Activated naive CD4-positive, alpha-beta T cell treated with anti-CD3 and anti-CD28 coated beads for 36 hours (primary cell): ENCODE measurements at regions of chr14 and their contacts with region 1.

Region 1: GRCh38 chr14:66507722-66508546 is at the start of gene GPHN:
- DNase-seq: peak; percentile 92
- H3K4me3 Mint-ChIP-seq: peak within 1 kb of the TSS; percentile 96
- H3K27ac Mint-ChIP-seq: peak within 1 kb of the TSS; percentile 85
- H3K4me1 Mint-ChIP-seq: peaks cover 28% of the 10 kb centered on the region
- H3K27me3 Mint-ChIP-seq: peaks cover 7% of the 10 kb centered on the region
- total RNA-seq, gene GPHN: 14.2 to 21.4 TPM

Region 2: GRCh38 chr14:66247662-66248193 is 260.2 kb before region 1 on chr14:
- CTCF ChIA-PET with region 1: no interaction called
- intact Hi-C with region 1: no loop called
- DNase-seq: no peak
- H3K4me3 Mint-ChIP-seq: no peak overlapping the region
- H3K27ac Mint-ChIP-seq: no peak overlapping the region
- H3K4me1 Mint-ChIP-seq: no peaks in the 10 kb centered on the region
- H3K27me3 Mint-ChIP-seq: peaks cover 2% of the 10 kb centered on the region

Region 3: GRCh38 chr14:66459603-66460002 is 48.3 kb before region 1 on chr14:
- CTCF ChIA-PET with region 1: no interaction called
- intact Hi-C with region 1: no loop called
- DNase-seq: no peak
- H3K4me3 Mint-ChIP-seq: no peak overlapping the region
- H3K27ac Mint-ChIP-seq: no peak overlapping the region
- H3K4me1 Mint-ChIP-seq: no peaks in the 10 kb centered on the region
- H3K27me3 Mint-ChIP-seq: no peaks in the 10 kb centered on the region

Region 4: DNA sequence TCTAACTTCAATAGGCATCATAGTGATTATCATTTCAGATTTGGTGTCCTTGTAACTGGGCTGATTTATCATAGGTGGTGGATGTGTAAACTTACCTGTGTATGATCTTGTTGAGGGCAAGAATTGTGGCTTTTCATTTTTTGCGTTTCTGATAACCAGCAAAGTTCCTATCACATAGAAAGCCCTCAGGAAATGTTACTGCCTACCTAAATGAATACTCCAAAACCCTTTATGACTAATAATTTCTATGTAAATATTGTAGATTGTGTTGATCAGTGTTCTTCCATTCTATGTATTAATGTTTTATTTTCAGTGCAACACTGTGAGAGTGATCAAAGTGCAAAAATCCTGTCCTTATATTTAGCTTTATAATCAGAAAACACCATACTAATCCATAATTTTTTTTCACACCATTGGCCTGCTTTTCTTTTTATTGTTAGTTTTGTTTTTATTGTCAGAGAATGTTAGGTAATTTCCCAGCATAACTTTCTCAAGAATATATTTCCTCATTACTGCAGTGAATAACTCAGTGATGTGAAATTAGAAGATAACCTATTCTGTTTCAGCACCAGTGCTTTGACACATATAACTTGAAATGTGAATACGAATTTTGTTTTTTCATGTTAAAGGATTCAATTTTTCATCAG is 94.1 kb after region 1 on chr14:
- CTCF ChIA-PET with region 1: no interaction called
- intact Hi-C with region 1: loop called (anchors 5 kb)
- DNase-seq: no peak
- H3K4me3 Mint-ChIP-seq: no peak overlapping the region
- H3K27ac Mint-ChIP-seq: no peak overlapping the region
- H3K4me1 Mint-ChIP-seq: peaks cover 20% of the 10 kb centered on the region
- H3K27me3 Mint-ChIP-seq: no peaks in the 10 kb centered on the region

Region 5: GRCh38 chr14:66649498-66649897 is 141.6 kb after region 1 on chr14:
- CTCF ChIA-PET with region 1: no interaction called
- intact Hi-C with region 1: loop called (anchors 5 kb)
- DNase-seq: peak; percentile 49
- H3K4me3 Mint-ChIP-seq: no peak overlapping the region
- H3K27ac Mint-ChIP-seq: no peak overlapping the region
- H3K4me1 Mint-ChIP-seq: peaks cover 9% of the 10 kb centered on the region
- H3K27me3 Mint-ChIP-seq: no peaks in the 10 kb centered on the region

Region 6: GRCh38 chr14:67240978-67241414 is 733.1 kb after region 1 on chr14:
- CTCF ChIA-PET with region 1: no interaction called
- intact Hi-C with region 1: loop called (anchors 1 kb)
- DNase-seq: peak; percentile 94
- H3K4me3 Mint-ChIP-seq: peak overlapping the region; percentile 85
- H3K27ac Mint-ChIP-seq: peak overlapping the region; percentile 86
- H3K4me1 Mint-ChIP-seq: peaks cover 19% of the 10 kb centered on the region
- H3K27me3 Mint-ChIP-seq: peaks cover 2% of the 10 kb centered on the region

Region 7: GRCh38 chr14:67695394-67695949 is 1187.5 kb after region 1 on chr14 and contains the start of gene RDH11:
- CTCF ChIA-PET with region 1: no interaction called
- intact Hi-C with region 1: loop called (anchors 5 kb)
- DNase-seq: peak; percentile 91
- H3K4me3 Mint-ChIP-seq: peak within 1 kb of the TSS; percentile 81
- H3K27ac Mint-ChIP-seq: peak within 1 kb of the TSS; percentile 91
- H3K4me1 Mint-ChIP-seq: peaks cover 22% of the 10 kb centered on the region
- H3K27me3 Mint-ChIP-seq: no peaks in the 10 kb centered on the region
- total RNA-seq, gene RDH11: 58.5 to 64.3 TPM